ENCODE measurements at regions of chr1 and their contacts with region 1.

Region 1: GRCh38 chr1:115463363-115463746 is 125.3 kb upstream of the NGF start:
- DNase-seq: peak; percentile 25
- H3K4me3 ChIP-seq: no peak overlapping the region
- H3K27ac ChIP-seq: no peak overlapping the region
- H3K4me1 ChIP-seq: no peaks in the 10 kb centered on the region
- H3K27me3 ChIP-seq: no peaks in the 10 kb centered on the region
- CTCF ChIP-seq: peak in 1 of 2 donors; percentile 70

Region 2: DNA sequence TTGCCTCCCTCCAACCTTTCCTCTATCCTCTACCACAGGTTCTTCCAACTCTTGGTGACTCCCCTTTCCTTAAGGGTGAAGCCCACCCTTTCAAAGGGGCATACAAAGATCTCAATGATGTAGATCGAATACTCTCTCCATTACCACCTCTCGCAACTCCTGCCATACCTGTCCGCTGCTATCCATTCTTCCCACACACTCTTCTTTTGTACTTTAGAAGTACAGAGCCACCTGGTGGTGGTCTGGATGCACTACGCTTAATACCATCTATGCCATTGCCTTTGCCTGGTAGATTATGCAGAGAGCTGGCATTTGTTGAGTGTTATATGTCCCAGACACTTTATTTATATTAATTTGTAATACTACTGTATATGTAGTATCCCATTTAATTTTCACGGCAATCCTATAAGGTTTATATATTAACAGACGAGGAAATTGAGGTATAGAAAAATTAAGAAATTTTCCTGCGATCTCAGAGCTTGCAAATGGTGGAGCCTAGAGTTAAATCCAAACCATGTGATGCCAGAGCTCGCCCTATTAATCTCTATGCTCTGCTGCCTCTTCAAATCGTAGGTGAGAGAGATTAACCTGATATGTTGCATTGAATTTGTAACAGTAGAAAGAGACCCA is 410.8 kb before region 1 on chr1:
- CTCF ChIA-PET with region 1: no interaction called
- dilution Hi-C with region 1: no loop called
- in situ Hi-C with region 1: no loop called
- intact Hi-C with region 1: loop called (anchors 5 kb)
- DNase-seq: peak; percentile 63
- H3K4me3 ChIP-seq: no peak overlapping the region
- H3K27ac ChIP-seq: no peak overlapping the region
- H3K4me1 ChIP-seq: peaks cover 12% of the 10 kb centered on the region
- H3K27me3 ChIP-seq: no peaks in the 10 kb centered on the region
- CTCF ChIP-seq: peak; percentile 87 to 94

Region 3: GRCh38 chr1:115275212-115275611 is 188.1 kb before region 1 on chr1:
- CTCF ChIA-PET with region 1: interaction called, 3 read pairs
- dilution Hi-C with region 1: no loop called
- in situ Hi-C with region 1: no loop called
- intact Hi-C with region 1: loop called (anchors 1 kb)
- DNase-seq: no peak
- H3K4me3 ChIP-seq: no peak overlapping the region
- H3K27ac ChIP-seq: no peak overlapping the region
- H3K4me1 ChIP-seq: no peaks in the 10 kb centered on the region
- H3K27me3 ChIP-seq: no peaks in the 10 kb centered on the region
- CTCF ChIP-seq: peak; percentile 45 to 72

Region 4: DNA sequence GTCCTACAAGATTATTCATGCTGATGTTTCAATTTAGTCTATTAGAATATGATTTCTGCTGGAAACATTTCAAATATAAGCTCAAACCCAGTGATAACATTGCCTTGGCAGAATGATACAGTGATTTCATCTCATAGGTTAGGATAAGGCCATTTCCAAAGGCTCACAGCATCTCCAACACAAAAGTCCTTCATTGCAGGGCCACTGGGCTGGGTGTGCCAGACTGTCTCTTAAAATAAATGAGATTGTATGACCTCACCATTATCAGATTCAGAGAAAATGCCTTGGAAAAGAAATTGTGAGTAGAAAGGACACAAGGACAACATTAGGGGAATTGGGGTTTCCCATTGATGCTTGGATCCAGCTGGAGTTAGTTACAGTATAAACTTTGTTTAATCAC is 155.7 kb before region 1 on chr1:
- CTCF ChIA-PET with region 1: interaction called, 21 read pairs
- dilution Hi-C with region 1: no loop called
- in situ Hi-C with region 1: no loop called
- intact Hi-C with region 1: no loop called
- DNase-seq: no peak
- H3K4me3 ChIP-seq: no peak overlapping the region
- H3K27ac ChIP-seq: no peak overlapping the region
- H3K4me1 ChIP-seq: peaks cover 14% of the 10 kb centered on the region
- H3K27me3 ChIP-seq: no peaks in the 10 kb centered on the region
- CTCF ChIP-seq: no peak

Region 5: GRCh38 chr1:115337633-115338456 is 125.5 kb before region 1 on chr1 and contains the start of gene NGF:
- CTCF ChIA-PET with region 1: no interaction called
- dilution Hi-C with region 1: no loop called
- in situ Hi-C with region 1: no loop called
- intact Hi-C with region 1: loop called (anchors 5 kb)
- DNase-seq: peak; percentile 31
- H3K4me3 ChIP-seq: peak within 1 kb of the TSS; percentile 35 to 48 (median 47)
- H3K27ac ChIP-seq: no peak within 1 kb of the TSS
- H3K4me1 ChIP-seq: peaks cover 9% of the 10 kb centered on the region
- H3K27me3 ChIP-seq: no peaks in the 10 kb centered on the region
- CTCF ChIP-seq: no peak
- total RNA-seq, gene NGF: 0.17 to 1.3 TPM

Measured in mammary epithelial cell (primary cell).